HepG2 (cell line): ENCODE measurements at regions of chr20 and their contacts with region 1.

Region 1: DNA sequence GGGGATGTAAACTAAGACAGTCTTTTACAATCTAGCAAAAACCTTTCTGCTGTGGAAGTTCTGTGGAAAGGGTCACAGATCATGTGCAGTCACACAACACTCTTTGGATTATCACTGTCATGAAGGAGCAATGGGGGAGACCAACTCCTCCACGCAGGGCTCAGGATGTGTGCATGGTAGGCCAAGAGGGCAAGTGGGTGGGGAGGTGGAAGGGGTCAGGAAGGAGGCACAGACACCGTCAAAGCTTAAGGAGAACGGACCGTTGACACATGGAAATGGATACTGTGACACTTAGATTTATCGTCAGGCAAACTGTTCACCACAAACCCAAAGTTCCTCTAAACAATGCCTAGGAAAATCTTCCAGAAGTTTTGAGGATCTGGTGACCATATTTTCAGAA is 215.8 kb downstream of the PAX1 start:
- DNase-seq: no peak
- ATAC-seq: no peak
- H3K4me3 ChIP-seq: no peak overlapping the region
- H3K27ac ChIP-seq: no peak overlapping the region
- H3K4me1 ChIP-seq: no peaks in the 10 kb centered on the region
- H3K27me3 ChIP-seq: no peaks in the 10 kb centered on the region
- CTCF ChIP-seq: no peak
- EP300 ChIP-seq: no peak
- POLR2A ChIP-seq: no peak
- RAD21 ChIP-seq: no peak

Region 2: GRCh38 chr20:21901470-21902275 is 19.6 kb before region 1 on chr20:
- CTCF ChIA-PET with region 1: no interaction called
- POLR2A ChIA-PET with region 1: no interaction called
- in situ Hi-C with region 1: no loop called
- intact Hi-C with region 1: no loop called
- DNase-seq: no peak
- ATAC-seq: no peak
- H3K4me3 ChIP-seq: no peak overlapping the region
- H3K27ac ChIP-seq: no peak overlapping the region
- H3K4me1 ChIP-seq: no peaks in the 10 kb centered on the region
- H3K27me3 ChIP-seq: no peaks in the 10 kb centered on the region; a peak in 1 of 5 replicates
- CTCF ChIP-seq: no peak
- EP300 ChIP-seq: no peak
- POLR2A ChIP-seq: no peak
- RAD21 ChIP-seq: no peak

Region 3: GRCh38 chr20:21936720-21937380 is 15.6 kb after region 1 on chr20:
- CTCF ChIA-PET with region 1: no interaction called
- POLR2A ChIA-PET with region 1: no interaction called
- in situ Hi-C with region 1: no loop called
- intact Hi-C with region 1: no loop called
- DNase-seq: no peak
- ATAC-seq: no peak
- H3K4me3 ChIP-seq: no peak overlapping the region
- H3K27ac ChIP-seq: no peak overlapping the region
- H3K4me1 ChIP-seq: no peaks in the 10 kb centered on the region
- H3K27me3 ChIP-seq: no peaks in the 10 kb centered on the region
- CTCF ChIP-seq: no peak
- EP300 ChIP-seq: no peak
- POLR2A ChIP-seq: no peak
- RAD21 ChIP-seq: no peak

Region 4: DNA sequence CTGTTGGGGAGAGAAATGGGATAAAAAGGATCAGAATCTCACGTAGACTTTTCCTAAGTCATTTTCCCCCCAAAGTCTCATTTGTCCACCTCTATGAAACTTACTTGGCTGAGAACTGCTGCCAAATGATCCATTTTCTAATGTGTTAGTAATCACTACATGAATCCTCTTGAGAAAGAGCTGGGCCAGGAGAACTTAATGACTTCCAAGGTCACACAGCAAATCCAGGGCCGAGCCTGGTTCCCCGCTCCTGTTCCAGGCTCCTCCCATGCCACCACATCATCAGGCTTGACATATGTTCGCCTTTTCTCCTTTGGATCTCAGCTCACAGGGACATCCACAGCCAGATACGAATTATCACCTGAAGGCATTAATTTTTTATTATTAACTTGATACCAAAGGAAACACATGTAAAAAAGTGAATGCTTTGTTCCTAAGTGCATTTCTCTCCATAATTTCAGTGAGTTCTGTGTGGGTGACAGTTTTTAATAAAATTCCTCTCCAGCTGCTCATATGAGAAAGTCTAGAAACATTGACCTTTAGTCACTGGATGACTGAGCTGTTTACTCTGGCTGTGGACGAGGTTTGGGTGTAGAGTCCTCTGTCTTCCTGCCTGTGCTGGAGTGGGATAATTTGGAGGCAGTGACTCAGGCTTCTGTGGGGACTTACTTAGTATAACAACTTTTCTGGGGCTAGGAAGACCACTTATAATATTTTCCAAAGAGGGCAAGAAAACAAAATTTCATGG is 60.5 kb after region 1 on chr20:
- CTCF ChIA-PET with region 1: no interaction called
- POLR2A ChIA-PET with region 1: no interaction called
- in situ Hi-C with region 1: no loop called
- intact Hi-C with region 1: loop called (anchors 10 kb)
- DNase-seq: peak; percentile 65
- ATAC-seq: peak; percentile 99
- H3K4me3 ChIP-seq: peak overlapping the region in 2 of 3 experiments; percentile 1 to 17; a peak in 2 of 6 replicates
- H3K27ac ChIP-seq: peak overlapping the region; percentile 8
- H3K4me1 ChIP-seq: peaks cover 21% of the 10 kb centered on the region
- H3K27me3 ChIP-seq: no peaks in the 10 kb centered on the region
- CTCF ChIP-seq: no peak
- EP300 ChIP-seq: peak in 1 of 2 experiments; percentile 52; a peak in 1 of 4 replicates
- POLR2A ChIP-seq: no peak
- RAD21 ChIP-seq: no peak

Region 5: DNA sequence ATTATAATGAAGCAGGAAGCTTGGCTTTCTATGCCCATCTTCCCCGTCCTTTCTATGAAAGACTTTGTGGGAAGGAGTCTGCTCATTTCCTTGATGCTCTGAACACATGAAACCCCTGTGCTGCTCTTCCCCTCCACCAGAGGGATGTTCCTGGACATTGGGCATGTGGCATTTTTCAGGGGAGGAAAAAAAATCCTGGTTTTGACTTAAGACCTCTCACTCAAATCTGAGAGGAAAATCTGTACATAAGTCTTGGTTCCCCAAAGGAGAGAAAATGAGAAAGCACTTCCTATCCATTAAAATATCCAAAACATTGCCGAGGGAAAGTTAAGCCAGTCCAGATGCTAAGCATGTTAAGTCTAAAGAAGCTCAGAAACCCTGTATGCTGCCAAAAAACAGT is 177.3 kb after region 1 on chr20:
- CTCF ChIA-PET with region 1: no interaction called
- POLR2A ChIA-PET with region 1: no interaction called
- in situ Hi-C with region 1: no loop called
- intact Hi-C with region 1: no loop called
- DNase-seq: no peak
- ATAC-seq: no peak
- H3K4me3 ChIP-seq: no peak overlapping the region
- H3K27ac ChIP-seq: no peak overlapping the region
- H3K4me1 ChIP-seq: no peaks in the 10 kb centered on the region
- H3K27me3 ChIP-seq: no peaks in the 10 kb centered on the region
- CTCF ChIP-seq: no peak
- EP300 ChIP-seq: no peak
- POLR2A ChIP-seq: no peak
- RAD21 ChIP-seq: no peak